Naive thymus-derived CD4-positive, alpha-beta T cell (primary cell): ENCODE measurements at regions of chr6 and their contacts with region 1.

Region 1: DNA sequence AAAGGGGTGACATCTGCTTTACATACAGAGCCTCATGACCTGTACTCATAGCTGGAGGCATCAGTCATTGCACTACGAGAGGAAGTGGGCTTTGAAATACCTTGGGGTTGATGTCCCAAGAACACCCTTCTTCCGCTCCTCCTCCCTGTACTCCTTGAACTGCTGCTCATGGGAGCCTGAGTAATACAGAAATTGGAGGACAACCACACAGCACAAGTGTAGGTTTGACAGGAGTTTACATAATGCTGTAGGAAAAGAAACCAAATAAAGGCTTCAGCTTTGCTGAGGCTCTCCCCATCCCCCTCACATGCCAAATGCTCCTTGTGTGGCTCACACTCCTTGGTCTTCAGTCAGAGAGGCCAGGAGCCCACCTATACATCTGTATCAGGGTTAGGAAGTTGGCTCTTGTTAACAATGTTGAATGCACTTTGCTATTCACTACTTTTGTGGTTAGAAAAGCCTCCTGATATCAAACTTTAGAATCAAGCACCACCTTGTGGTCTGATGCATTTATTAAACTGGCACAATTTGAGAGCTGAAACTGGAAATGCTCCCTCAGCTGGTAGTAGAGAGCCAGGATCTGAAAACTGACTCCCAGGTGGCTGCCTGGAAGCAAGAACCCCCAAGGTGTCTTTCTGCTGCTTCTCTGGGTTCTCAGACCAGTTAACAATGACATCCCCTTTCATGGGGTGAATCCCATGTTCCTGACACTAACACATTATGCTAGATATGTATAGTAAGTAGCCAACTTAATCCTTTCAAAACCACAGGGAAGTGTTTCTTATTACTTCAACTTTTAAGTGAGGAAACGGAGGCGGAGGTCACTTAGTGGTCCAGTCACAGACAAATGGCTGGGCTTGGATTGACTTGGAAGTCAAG is 56.2 kb upstream of the EDN1 start:
- DNase-seq: peak; percentile 8 to 79 (median 66)
- ATAC-seq: peak; percentile 83
- H3K4me3 ChIP-seq: no peak overlapping the region
- H3K4me3 Mint-ChIP-seq: peak overlapping the region in 4 of 10 donors; percentile 6 to 55 (median 10)
- H3K27ac ChIP-seq: no peak overlapping the region
- H3K27ac Mint-ChIP-seq: peak overlapping the region in 4 of 9 donors; percentile 18 to 55 (median 38)
- H3K4me1 ChIP-seq: peaks cover 13 to 16% of the 10 kb centered on the region in 2 donors
- H3K4me1 Mint-ChIP-seq: peaks cover 12 to 37% (median 22%) of the 10 kb centered on the region in 7 donors
- H3K27me3 ChIP-seq: no peaks in the 10 kb centered on the region
- H3K27me3 Mint-ChIP-seq: peaks cover 0 to under 1% (median 0%) of the 10 kb centered on the region in 5 donors

Region 2: GRCh38 chr6:11496152-11497060 is 737.5 kb before region 1 on chr6:
- CTCF ChIA-PET with region 1: no interaction called
- POLR2A ChIA-PET with region 1: no interaction called
- intact Hi-C with region 1: no loop called
- DNase-seq: peak; percentile 35 to 85 (median 78)
- ATAC-seq: peak; percentile 95
- H3K4me3 ChIP-seq: no peak overlapping the region
- H3K4me3 Mint-ChIP-seq: no peak overlapping the region
- H3K27ac ChIP-seq: no peak overlapping the region
- H3K27ac Mint-ChIP-seq: no peak overlapping the region
- H3K4me1 ChIP-seq: peaks cover 0 to 10% of the 10 kb centered on the region in 2 donors
- H3K4me1 Mint-ChIP-seq: peaks cover 0 to 3% (median 0%) of the 10 kb centered on the region in 7 donors
- H3K27me3 ChIP-seq: no peaks in the 10 kb centered on the region
- H3K27me3 Mint-ChIP-seq: no peaks in the 10 kb centered on the region

Region 3: GRCh38 chr6:11700118-11700718 is 533.7 kb before region 1 on chr6:
- CTCF ChIA-PET with region 1: interaction called, 5 read pairs
- POLR2A ChIA-PET with region 1: no interaction called
- intact Hi-C with region 1: loop called (anchors 1 kb)
- DNase-seq: peak in 7 of 9 donors; percentile 22 to 63 (median 51)
- ATAC-seq: peak; percentile 60
- H3K4me3 ChIP-seq: no peak overlapping the region
- H3K4me3 Mint-ChIP-seq: no peak overlapping the region
- H3K27ac ChIP-seq: no peak overlapping the region
- H3K27ac Mint-ChIP-seq: peak overlapping the region in 3 of 9 donors; percentile 21 to 66 (median 41)
- H3K4me1 ChIP-seq: peaks cover 0 to 9% of the 10 kb centered on the region in 2 donors
- H3K4me1 Mint-ChIP-seq: peaks cover 10 to 42% (median 35%) of the 10 kb centered on the region in 7 donors
- H3K27me3 ChIP-seq: no peaks in the 10 kb centered on the region
- H3K27me3 Mint-ChIP-seq: no peaks in the 10 kb centered on the region

Region 4: DNA sequence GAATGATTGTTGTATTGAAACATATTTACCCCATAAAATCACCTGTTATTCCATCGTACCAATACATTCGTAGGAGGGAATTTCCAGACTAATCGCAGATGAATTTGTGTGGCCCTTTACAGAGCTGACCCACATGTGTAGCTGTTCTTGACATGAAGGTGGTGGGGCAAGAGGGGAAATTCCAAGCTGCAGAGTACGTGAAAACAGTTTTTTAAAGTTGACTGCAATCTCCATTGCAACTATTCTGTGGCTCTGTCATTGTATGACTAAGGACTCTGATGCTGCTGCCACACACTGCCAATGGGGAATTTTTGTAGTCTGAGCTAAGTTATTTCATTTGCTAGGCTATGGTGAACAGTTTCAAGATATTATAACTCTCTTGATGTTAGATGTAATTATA is 408.9 kb before region 1 on chr6:
- CTCF ChIA-PET with region 1: interaction called, 3 read pairs
- POLR2A ChIA-PET with region 1: no interaction called
- intact Hi-C with region 1: loop called in 1 of 2 experiments (anchors 1 kb)
- DNase-seq: peak in 1 of 9 donors; percentile 29
- ATAC-seq: peak; percentile 47
- H3K4me3 ChIP-seq: no peak overlapping the region
- H3K4me3 Mint-ChIP-seq: no peak overlapping the region
- H3K27ac ChIP-seq: no peak overlapping the region
- H3K27ac Mint-ChIP-seq: peak overlapping the region in 1 of 9 donors; percentile 65
- H3K4me1 ChIP-seq: no peaks in the 10 kb centered on the region
- H3K4me1 Mint-ChIP-seq: peaks cover 2 to 10% (median 7%) of the 10 kb centered on the region in 7 donors
- H3K27me3 ChIP-seq: no peaks in the 10 kb centered on the region
- H3K27me3 Mint-ChIP-seq: no peaks in the 10 kb centered on the region

Region 5: GRCh38 chr6:12039540-12040459 is 194.1 kb before region 1 on chr6:
- CTCF ChIA-PET with region 1: interaction called, 5 read pairs
- POLR2A ChIA-PET with region 1: no interaction called
- intact Hi-C with region 1: loop called in 1 of 2 experiments (anchors 1 kb)
- DNase-seq: no peak
- ATAC-seq: no peak
- H3K4me3 ChIP-seq: no peak overlapping the region
- H3K4me3 Mint-ChIP-seq: peak overlapping the region in 3 of 10 donors; percentile 29 to 74 (median 73)
- H3K27ac ChIP-seq: no peak overlapping the region
- H3K27ac Mint-ChIP-seq: peak overlapping the region; percentile 30 to 83 (median 59)
- H3K4me1 ChIP-seq: peaks cover 0 to 22% of the 10 kb centered on the region in 2 donors
- H3K4me1 Mint-ChIP-seq: peaks cover 45 to 80% (median 71%) of the 10 kb centered on the region in 7 donors
- H3K27me3 ChIP-seq: peaks cover 0 to 3% of the 10 kb centered on the region in 2 donors
- H3K27me3 Mint-ChIP-seq: no peaks in the 10 kb centered on the region

Region 6: DNA sequence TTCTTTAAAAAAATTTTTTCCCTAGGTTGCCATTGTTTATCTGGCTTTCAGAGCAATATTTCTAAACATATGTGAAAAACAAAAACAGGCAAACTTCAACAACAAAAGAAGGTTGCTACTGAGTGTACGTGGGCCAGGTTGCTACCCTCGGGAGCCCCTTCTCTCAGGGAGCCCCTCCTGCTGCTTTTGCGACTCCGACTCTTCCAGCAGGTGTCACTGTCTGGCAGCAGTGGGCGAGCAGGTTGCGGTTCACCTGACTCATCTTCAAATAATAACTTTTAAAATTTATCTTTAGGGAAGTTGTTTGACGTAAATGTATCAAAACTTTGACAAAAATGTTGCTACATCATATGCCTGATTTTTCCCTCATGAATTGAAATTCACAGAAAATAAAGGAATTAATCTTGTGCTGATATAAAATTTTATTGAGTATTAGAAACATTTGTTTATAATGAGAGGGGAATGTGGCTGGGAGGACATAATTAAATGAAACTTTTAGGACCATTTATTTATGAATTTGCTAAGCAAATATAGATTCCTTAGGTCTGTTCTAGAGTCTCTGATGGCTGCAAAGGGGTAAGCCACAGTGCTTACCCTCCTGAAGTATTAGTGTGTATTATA is 83.0 kb before region 1 on chr6:
- CTCF ChIA-PET with region 1: interaction called, 3 read pairs
- POLR2A ChIA-PET with region 1: no interaction called
- intact Hi-C with region 1: loop called (anchors 1 kb)
- DNase-seq: peak in 5 of 9 donors; percentile 16 to 45 (median 35)
- ATAC-seq: no peak
- H3K4me3 ChIP-seq: no peak overlapping the region
- H3K4me3 Mint-ChIP-seq: no peak overlapping the region
- H3K27ac ChIP-seq: no peak overlapping the region
- H3K27ac Mint-ChIP-seq: no peak overlapping the region
- H3K4me1 ChIP-seq: no peaks in the 10 kb centered on the region
- H3K4me1 Mint-ChIP-seq: peaks cover 4 to 29% (median 14%) of the 10 kb centered on the region in 7 donors
- H3K27me3 ChIP-seq: no peaks in the 10 kb centered on the region
- H3K27me3 Mint-ChIP-seq: no peaks in the 10 kb centered on the region

Region 7: GRCh38 chr6:13296536-13296997 is 1062.6 kb after region 1 on chr6:
- CTCF ChIA-PET with region 1: no interaction called
- POLR2A ChIA-PET with region 1: no interaction called
- intact Hi-C with region 1: no loop called
- DNase-seq: no peak
- ATAC-seq: no peak
- H3K4me3 ChIP-seq: no peak overlapping the region
- H3K4me3 Mint-ChIP-seq: no peak overlapping the region
- H3K27ac ChIP-seq: no peak overlapping the region
- H3K27ac Mint-ChIP-seq: no peak overlapping the region
- H3K4me1 ChIP-seq: no peaks in the 10 kb centered on the region
- H3K4me1 Mint-ChIP-seq: peaks cover 0 to 2% (median 0%) of the 10 kb centered on the region in 7 donors
- H3K27me3 ChIP-seq: no peaks in the 10 kb centered on the region
- H3K27me3 Mint-ChIP-seq: no peaks in the 10 kb centered on the region